ENCODE measurements at regions of chr9 and their contacts with region 1.

Region 1: GRCh38 chr9:133335878-133336811 is at the start of gene SURF6:
- DNase-seq: peak; percentile 76 to 95 (median 88)
- H3K4me3 ChIP-seq: peak within 1 kb of the TSS; percentile 48 to 100 (median 90)
- H3K27ac ChIP-seq: peak within 1 kb of the TSS in 54 of 59 donors; percentile 6 to 90 (median 73)
- H3K27me3 ChIP-seq: no peaks in the 10 kb centered on the region
- CTCF ChIP-seq: peak in 38 of 56 donors; percentile 11 to 57 (median 32)
- total RNA-seq, gene SURF6: 13.7 to 27.8 (median 19.2) TPM

Region 2: DNA sequence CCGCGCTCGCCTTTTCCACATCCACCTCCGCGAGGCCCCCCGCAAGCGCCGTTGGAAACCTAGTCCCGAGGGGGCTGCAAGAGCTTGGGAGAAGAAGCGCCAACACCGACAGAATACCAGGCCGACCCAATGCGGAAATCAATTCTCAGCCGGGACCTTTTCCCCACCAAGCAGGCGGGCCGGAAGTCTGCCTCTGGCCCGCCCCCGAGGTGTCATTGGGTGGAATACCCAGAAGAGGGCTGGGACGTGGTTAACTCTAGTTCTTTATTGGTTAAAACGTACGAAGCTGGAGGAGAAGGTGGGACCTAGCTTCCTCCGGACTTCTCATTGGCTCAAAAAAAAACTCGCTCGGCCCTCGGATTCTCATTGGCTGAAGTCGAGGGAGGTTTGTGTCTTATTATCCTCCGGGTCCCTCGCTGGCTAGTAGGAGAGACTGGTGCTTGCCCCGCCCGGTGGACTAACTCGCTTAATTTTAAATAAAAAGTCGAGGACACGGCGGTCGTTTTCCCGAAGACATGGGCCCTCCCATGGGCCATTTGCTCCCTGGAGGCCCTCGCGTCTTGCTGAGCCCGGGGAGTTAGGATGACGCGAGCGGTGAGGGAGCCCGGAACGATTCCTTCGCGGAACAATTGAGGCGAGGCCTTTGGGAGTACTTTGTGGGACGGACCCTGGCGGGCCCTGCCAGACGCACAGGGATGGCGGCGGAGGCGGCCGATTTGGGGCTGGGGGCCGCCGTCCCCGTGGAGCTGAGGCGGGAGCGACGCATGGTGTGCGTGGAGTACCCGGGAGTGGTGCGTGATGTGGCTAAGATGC is 305.6 kb before region 1 on chr9 and contains the start of gene GTF3C5:
- intact Hi-C with region 1: loop called (anchors 5 to 10 kb)
- DNase-seq: peak; percentile 85 to 95 (median 94)
- H3K4me3 ChIP-seq: peak within 1 kb of the TSS; percentile 69 to 100 (median 93)
- H3K27ac ChIP-seq: peak within 1 kb of the TSS; percentile 53 to 98 (median 92)
- H3K27me3 ChIP-seq: no peaks in the 10 kb centered on the region
- CTCF ChIP-seq: peak in 36 of 56 donors; percentile 3 to 61 (median 24)
- total RNA-seq, gene GTF3C5: 37.5 to 98.9 (median 61.0) TPM

Region 3: GRCh38 chr9:133184962-133185361 is 151.2 kb before region 1 on chr9:
- intact Hi-C with region 1: loop called in 1 of 2 experiments (anchors 5 kb)
- DNase-seq: peak in 4 of 10 donors; percentile 27 to 74 (median 44)
- H3K4me3 ChIP-seq: peak overlapping the region in 1 of 59 donors; percentile 7
- H3K27ac ChIP-seq: no peak overlapping the region
- H3K27me3 ChIP-seq: peaks cover 0 to 5% (median 0%) of the 10 kb centered on the region in 45 donors
- CTCF ChIP-seq: peak; percentile 51 to 78 (median 66)

Region 4: GRCh38 chr9:133347985-133348717 is 12.0 kb after region 1 on chr9 and contains the starts of genes MED22 and RPL7A:
- intact Hi-C with region 1: loop called in 1 of 2 experiments (anchors 1 kb)
- DNase-seq: peak; percentile 75 to 97 (median 90)
- H3K4me3 ChIP-seq: peak within 1 kb of the TSS; percentile 66 to 100 (median 95)
- H3K27ac ChIP-seq: peak within 1 kb of the TSS; percentile 39 to 99 (median 92)
- H3K27me3 ChIP-seq: no peaks in the 10 kb centered on the region
- CTCF ChIP-seq: peak in 30 of 56 donors; percentile 11 to 48 (median 26)
- total RNA-seq, gene MED22: 19.2 to 41.3 (median 30.0) TPM
- total RNA-seq, gene RPL7A: 512 to 837 (median 653) TPM

Region 5: DNA sequence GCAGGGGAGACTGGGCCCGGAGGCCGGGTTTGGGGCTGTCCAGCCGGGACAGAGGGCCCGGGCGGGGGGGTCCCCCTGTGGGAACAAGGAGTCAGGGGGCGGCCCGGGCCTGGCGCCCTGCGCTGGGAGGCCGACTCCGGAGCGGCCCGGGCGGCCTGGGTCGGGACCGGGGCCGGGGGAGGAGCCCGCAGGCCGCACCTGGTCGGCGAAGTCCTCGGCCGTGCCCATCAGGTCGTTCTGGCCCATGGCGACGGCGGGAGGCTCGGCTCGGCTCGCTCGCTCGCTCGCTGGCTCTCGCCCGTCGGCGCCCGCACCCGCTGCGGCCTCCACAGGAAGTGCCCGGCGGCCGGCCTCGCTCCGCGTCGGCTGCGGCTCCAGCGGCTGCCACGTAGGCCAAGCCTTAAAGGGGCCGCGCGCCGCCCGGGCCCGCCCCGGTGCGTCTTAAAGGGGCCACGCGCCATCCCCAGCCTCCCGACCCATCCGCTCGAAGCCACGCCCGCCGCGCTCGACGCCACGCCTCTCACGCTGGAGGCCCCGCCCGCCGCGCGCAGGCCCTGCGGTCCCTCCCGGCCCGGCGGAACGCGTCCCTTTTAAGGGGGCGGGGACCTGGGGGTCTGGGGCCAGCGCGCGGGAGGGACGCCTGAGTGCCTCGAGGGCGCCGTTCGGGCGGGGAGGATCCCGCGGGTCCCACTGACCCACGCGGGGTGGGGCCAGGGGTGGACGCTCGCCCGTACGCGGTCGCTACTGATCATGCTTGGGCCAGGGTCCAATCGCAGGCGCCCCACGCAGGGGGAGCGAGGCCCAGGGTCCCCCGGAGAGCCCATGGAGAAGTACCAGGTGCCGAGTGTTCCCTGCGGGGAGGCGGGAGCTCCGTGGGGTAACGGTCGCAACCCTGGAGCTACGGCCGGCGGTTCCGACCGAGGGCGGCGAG is 39.8 kb after region 1 on chr9 and contains the starts of genes STKLD1 and SURF4:
- intact Hi-C with region 1: loop called (anchors 1 to 5 kb)
- DNase-seq: peak; percentile 90 to 98 (median 95)
- H3K4me3 ChIP-seq: peak within 1 kb of the TSS; percentile 69 to 100 (median 96)
- H3K27ac ChIP-seq: peak within 1 kb of the TSS; percentile 42 to 97 (median 90)
- H3K27me3 ChIP-seq: no peaks in the 10 kb centered on the region
- CTCF ChIP-seq: peak in 23 of 56 donors; percentile 1 to 40 (median 24)
- total RNA-seq, gene STKLD1: 1.6 to 9.9 (median 5.2) TPM
- total RNA-seq, gene SURF4: 55.4 to 99.4 (median 69.8) TPM

Region 6: GRCh38 chr9:133417541-133418461 is 81.7 kb after region 1 on chr9 and contains the start of gene REXO4:
- intact Hi-C with region 1: loop called (anchors 2 to 5 kb)
- DNase-seq: peak; percentile 57 to 87 (median 77)
- H3K4me3 ChIP-seq: peak within 1 kb of the TSS; percentile 73 to 98 (median 91)
- H3K27ac ChIP-seq: peak within 1 kb of the TSS in 58 of 59 donors; percentile 51 to 97 (median 87)
- H3K27me3 ChIP-seq: no peaks in the 10 kb centered on the region
- CTCF ChIP-seq: peak in 18 of 56 donors; percentile 6 to 64 (median 24)
- total RNA-seq, gene REXO4: 13.3 to 35.7 (median 24.4) TPM